Activated CD4-positive, alpha-beta T cell treated with anti-CD3 and anti-CD28 coated beads, Interleukin-2, amount 10 ng/mL, durations not matched to agents 7 days and 5 days (primary cell): ENCODE measurements at regions of chr19 and their contacts with region 1.

Region 1: DNA sequence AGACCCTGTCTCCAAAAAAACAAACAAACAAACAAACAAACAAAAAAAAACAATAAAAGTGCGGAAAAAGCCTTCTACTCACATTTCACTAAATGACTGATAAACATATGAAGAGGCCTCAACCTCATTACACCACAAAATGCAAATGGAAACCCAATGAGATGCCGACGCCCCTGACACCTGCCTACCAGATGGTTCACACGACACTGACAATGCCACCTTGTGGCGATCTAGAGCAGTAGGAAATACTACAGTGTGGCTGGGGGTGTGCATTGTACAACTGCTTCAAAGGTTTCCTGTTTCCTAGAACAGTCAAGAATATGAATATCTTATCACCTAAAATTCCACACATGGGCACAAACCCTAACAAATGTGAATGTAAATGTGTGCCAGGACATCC is 14.0 kb downstream of the SCGB2B2 start:
- DNase-seq: peak; percentile 64
- H3K4me3 Mint-ChIP-seq: no peak overlapping the region
- H3K27ac Mint-ChIP-seq: no peak overlapping the region
- H3K4me1 Mint-ChIP-seq: peaks cover 24% of the 10 kb centered on the region
- H3K27me3 Mint-ChIP-seq: peaks cover 3% of the 10 kb centered on the region

Region 2: DNA sequence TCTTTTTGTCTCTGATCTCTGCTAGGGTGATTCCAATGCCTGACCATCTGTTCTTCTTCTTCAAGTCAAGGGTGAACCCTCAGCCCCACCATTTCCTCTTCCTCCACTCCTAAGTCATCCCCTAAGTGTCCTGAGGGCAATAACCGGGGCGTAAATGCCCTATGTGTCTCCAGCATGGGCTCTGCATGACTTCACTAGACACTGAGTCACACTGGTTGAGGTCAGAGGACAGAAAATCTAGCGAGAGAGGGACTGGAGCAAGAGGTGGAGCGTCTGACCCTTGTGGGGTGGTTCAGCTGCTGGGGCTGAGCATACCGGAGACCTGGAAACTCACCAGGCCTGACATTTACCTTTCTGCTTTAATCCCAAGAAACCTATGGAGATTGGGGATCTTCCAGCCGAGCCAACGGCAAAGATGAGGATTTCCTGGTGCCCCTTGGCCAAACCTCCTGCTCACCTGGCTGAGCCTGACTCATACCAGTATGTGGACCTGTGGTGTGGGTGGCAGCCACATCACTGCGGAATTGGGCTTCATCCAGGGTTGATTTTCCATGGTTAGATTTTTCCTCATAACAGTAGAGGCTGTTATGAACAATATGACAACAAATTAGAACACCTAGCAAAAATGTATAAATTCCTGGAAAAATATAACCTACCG is 12.9 kb before region 1 on chr19:
- CTCF ChIA-PET with region 1: no interaction called
- POLR2A ChIA-PET with region 1: no interaction called
- DNase-seq: no peak
- H3K4me3 Mint-ChIP-seq: no peak overlapping the region
- H3K27ac Mint-ChIP-seq: peak overlapping the region; percentile 11
- H3K4me1 Mint-ChIP-seq: no peaks in the 10 kb centered on the region
- H3K27me3 Mint-ChIP-seq: no peaks in the 10 kb centered on the region

Region 3: DNA sequence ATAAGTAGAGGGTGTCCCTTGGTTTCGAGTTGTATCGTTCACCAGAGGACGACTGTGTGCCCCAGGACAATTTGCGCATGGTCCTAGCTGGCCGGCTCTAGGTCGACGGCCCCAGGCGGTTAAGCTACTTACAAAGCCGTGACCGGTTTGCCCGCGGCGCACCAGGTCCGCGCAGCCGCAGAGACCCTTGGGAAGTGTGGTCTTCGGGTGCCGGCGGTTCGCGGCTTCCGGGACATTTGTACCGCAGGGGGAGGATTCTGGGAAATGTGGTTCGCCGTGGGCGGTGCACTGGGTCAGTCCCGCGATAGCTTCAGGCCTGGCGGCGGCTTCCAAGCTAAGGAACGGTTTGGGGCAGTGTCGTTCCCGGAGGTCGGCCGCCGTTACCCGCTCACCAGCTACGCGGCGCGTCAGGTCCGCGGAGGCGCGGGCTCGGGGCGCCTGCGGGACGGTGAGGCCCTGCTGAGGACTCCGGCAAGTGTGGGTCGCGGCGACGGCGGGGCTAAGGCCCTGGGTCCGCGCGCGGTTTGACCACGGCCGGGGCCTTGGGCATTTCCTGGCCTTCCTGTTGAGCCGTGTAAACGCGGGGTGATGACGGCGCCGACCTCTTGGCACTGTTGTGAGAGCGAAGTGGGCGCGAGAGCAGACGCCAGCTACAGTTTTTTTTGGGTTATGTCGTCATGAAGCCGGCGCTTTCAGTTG is 14.6 kb after region 1 on chr19 and contains the start of gene ZNF302:
- CTCF ChIA-PET with region 1: interaction called, 10 read pairs
- POLR2A ChIA-PET with region 1: no interaction called
- DNase-seq: peak; percentile 95
- H3K4me3 Mint-ChIP-seq: peak within 1 kb of the TSS; percentile 84
- H3K27ac Mint-ChIP-seq: peak within 1 kb of the TSS; percentile 97
- H3K4me1 Mint-ChIP-seq: peaks cover 29% of the 10 kb centered on the region
- H3K27me3 Mint-ChIP-seq: peaks cover 3% of the 10 kb centered on the region
- total RNA-seq, gene ZNF302: 23.1 to 24.3 TPM

Region 4: GRCh38 chr19:34722353-34722752 is 59.4 kb after region 1 on chr19:
- CTCF ChIA-PET with region 1: no interaction called
- POLR2A ChIA-PET with region 1: no interaction called
- DNase-seq: no peak
- H3K4me3 Mint-ChIP-seq: no peak overlapping the region
- H3K27ac Mint-ChIP-seq: no peak overlapping the region
- H3K4me1 Mint-ChIP-seq: no peaks in the 10 kb centered on the region
- H3K27me3 Mint-ChIP-seq: peaks cover 11% of the 10 kb centered on the region

Region 5: GRCh38 chr19:34818270-34818669 is 155.4 kb after region 1 on chr19:
- CTCF ChIA-PET with region 1: no interaction called
- POLR2A ChIA-PET with region 1: no interaction called
- DNase-seq: no peak
- H3K4me3 Mint-ChIP-seq: no peak overlapping the region
- H3K27ac Mint-ChIP-seq: no peak overlapping the region
- H3K4me1 Mint-ChIP-seq: peaks cover under 1% of the 10 kb centered on the region
- H3K27me3 Mint-ChIP-seq: no peaks in the 10 kb centered on the region